Gastrocnemius medialis (tissue), 4 donors: ENCODE measurements at regions of chr19 and their contacts with region 1.

Region 1: DNA sequence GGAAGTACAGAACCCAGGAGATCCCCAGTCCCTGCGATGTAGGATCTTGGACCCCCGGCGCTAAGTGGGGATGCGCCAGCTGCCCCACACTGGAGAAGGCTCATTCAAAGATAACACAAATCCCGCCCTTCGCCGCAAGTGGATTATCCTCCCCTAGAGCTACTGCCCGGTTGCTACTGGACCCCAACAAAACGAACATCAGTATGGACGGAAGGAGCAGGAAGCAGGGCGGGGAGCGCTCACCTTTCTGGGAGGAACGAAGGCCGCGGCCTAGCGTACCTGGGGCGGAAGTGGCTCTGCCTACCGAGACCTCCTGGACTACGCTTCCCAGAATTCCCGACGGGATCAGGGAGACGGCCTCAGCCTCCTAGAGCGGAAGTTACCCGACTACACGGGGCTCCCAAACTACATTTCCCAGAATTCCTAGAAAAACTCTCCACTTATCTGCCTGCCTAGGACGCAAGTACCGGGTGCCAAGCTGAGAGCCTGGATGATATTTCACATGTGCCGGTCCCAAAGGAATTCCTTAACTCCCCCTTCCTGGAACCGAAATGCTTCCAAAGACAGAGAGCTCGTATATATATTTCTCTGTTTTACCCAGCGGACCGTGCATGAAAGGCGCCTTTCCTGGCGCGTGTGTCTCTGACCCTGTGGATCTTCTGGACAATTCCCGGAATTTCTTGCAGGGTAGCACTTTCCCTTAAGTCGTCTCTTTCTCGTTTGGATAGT is at the start of gene ZNF112:
- DNase-seq: peak; percentile 85 to 88
- ATAC-seq: peak; percentile 100
- H3K4me3 ChIP-seq: peak within 1 kb of the TSS; percentile 51 to 74 (median 65)
- H3K27ac ChIP-seq: peak within 1 kb of the TSS; percentile 46 to 68 (median 58)
- H3K4me1 ChIP-seq: peaks cover 8 to 9% of the 10 kb centered on the region in 2 donors
- H3K27me3 ChIP-seq: no peaks in the 10 kb centered on the region
- CTCF ChIP-seq: no peak
- POLR2A ChIP-seq: no peak
- total RNA-seq, gene ZNF112: 0.78 to 4.0 (median 1.6) TPM

Region 2: DNA sequence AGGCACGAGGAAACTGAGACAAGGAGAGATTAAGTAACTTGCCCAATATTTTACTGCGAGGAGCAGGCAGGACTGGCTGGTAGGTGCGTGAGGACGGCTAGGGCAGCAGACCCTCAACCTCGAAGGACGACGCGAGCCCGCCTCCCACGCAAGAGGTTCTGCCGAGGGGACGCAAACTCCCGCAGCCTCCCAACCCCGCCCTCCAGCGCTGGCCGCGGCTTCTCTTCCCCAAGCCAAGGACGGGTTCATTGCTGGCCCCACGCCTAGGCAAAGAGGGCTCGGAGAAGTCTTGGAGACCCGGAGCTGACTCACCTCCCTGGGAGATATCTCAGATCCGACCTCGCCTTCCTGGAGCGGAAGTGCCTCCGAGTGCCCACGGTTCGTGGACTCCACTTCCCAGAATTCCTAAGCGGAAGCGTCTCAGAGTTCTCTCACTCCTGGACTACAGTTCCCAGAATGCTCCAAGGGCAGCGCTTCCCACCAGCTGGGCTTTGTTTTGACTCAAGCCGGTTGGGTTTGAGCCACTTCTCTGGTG is 51.8 kb before region 1 on chr19 and contains the start of gene ZNF235:
- in situ Hi-C with region 1: no loop called
- intact Hi-C with region 1: loop called (anchors 1 kb)
- DNase-seq: peak; percentile 88 to 94
- ATAC-seq: peak; percentile 100
- H3K4me3 ChIP-seq: peak within 1 kb of the TSS; percentile 64 to 86 (median 78)
- H3K27ac ChIP-seq: peak within 1 kb of the TSS; percentile 77 to 87 (median 82)
- H3K4me1 ChIP-seq: peaks cover 3 to 12% of the 10 kb centered on the region in 2 donors
- H3K27me3 ChIP-seq: no peaks in the 10 kb centered on the region
- CTCF ChIP-seq: no peak
- POLR2A ChIP-seq: peak in 1 of 2 donors; percentile 42
- total RNA-seq, gene ZNF235: 1.9 to 3.3 (median 2.1) TPM

Region 3: DNA sequence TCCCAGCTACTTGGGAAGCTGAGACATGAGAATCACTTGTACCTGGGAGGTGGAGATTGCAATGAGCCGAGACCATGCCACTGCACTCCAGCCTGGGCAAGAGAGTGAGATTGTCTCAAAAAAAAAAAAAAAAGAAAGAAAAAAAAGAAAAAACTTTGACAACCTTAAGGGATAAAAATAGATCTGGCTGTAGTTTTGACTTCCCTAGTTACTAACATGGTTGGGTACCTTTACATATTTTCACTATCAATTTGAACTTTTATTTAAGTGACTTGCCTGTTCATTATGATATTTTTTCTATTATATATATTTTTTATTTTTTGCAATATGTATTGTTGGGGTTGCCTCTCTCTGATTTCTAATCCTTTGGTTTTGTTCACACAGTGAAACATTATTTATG is 43.3 kb before region 1 on chr19:
- in situ Hi-C with region 1: loop called in 1 of 4 experiments (anchors 5 kb)
- intact Hi-C with region 1: no loop called
- DNase-seq: no peak
- ATAC-seq: no peak
- H3K4me3 ChIP-seq: no peak overlapping the region
- H3K27ac ChIP-seq: no peak overlapping the region
- H3K4me1 ChIP-seq: no peaks in the 10 kb centered on the region
- H3K27me3 ChIP-seq: no peaks in the 10 kb centered on the region
- CTCF ChIP-seq: no peak
- POLR2A ChIP-seq: no peak

Region 4: GRCh38 chr19:44401139-44402115 is 44.9 kb after region 1 on chr19 and contains the start of gene ZNF285:
- in situ Hi-C with region 1: no loop called
- intact Hi-C with region 1: loop called (anchors 1 kb)
- DNase-seq: peak; percentile 74 to 85
- ATAC-seq: peak; percentile 93 to 100
- H3K4me3 ChIP-seq: peak within 1 kb of the TSS; percentile 62 to 88 (median 65)
- H3K27ac ChIP-seq: peak within 1 kb of the TSS in 1 of 4 donors; percentile 55
- H3K4me1 ChIP-seq: no peaks in the 10 kb centered on the region
- H3K27me3 ChIP-seq: peaks cover 0 to 8% (median 0%) of the 10 kb centered on the region in 3 donors
- CTCF ChIP-seq: no peak
- POLR2A ChIP-seq: no peak
- total RNA-seq, gene ZNF285: 0.61 to 1.0 (median 0.69) TPM